ENCODE measurements at regions of chr4 and their contacts with region 1.

Region 1: DNA sequence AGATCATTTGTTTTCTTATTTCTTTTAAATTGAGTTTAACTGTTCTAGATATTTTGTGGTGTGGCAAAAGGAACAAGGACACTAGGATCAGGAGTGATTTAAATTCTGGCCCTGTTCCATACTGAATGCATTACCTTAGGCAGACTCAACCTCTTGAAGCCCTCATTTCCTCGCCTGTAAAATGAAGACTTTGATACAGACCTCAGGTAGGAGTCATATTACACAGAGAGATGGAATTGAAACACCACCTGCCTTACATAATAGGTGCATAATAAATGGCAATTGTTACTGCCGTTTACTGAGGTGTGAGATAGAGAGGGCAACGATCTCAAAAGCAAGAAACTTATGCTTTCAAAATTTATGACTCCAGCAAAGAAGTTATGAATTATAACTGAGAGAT is 28.2 kb upstream of the RASSF6 start:
- DNase-seq: no peak
- H3K4me3 ChIP-seq: no peak overlapping the region
- H3K27ac ChIP-seq: no peak overlapping the region
- H3K4me1 ChIP-seq: peaks cover 25% of the 10 kb centered on the region
- H3K27me3 ChIP-seq: no peaks in the 10 kb centered on the region
- CTCF ChIP-seq: no peak

Region 2: GRCh38 chr4:73593631-73594241 is 54.7 kb before region 1 on chr4:
- CTCF ChIA-PET with region 1: no interaction called
- dilution Hi-C with region 1: loop called (anchors 5 kb)
- in situ Hi-C with region 1: loop called in 1 of 2 experiments (anchors 10 kb)
- intact Hi-C with region 1: loop called (anchors 1 kb)
- DNase-seq: no peak
- H3K4me3 ChIP-seq: no peak overlapping the region
- H3K27ac ChIP-seq: no peak overlapping the region
- H3K4me1 ChIP-seq: peaks cover 26% of the 10 kb centered on the region
- H3K27me3 ChIP-seq: no peaks in the 10 kb centered on the region
- CTCF ChIP-seq: peak; percentile 51 to 62

Region 3: DNA sequence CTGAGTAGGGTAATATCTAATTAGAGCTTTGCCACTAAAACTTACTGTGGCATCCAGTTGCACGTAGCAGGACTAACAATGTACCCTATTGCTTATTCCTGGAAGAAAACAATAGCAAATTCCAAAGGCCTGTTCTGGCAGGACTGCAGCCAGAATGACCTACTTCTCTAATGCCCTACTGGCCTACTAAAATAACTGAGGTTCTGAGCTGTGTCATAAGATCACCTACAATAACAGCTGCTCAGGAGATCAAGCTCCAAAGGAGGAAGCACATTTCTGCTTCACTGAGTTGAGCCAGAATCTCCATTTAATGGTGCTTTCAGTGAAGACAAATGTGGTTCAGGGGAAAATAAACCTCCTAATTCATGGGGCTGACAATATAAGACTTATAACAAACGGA is 49.7 kb after region 1 on chr4:
- CTCF ChIA-PET with region 1: no interaction called
- dilution Hi-C with region 1: no loop called
- in situ Hi-C with region 1: no loop called
- intact Hi-C with region 1: no loop called
- DNase-seq: peak; percentile 87
- H3K4me3 ChIP-seq: no peak overlapping the region
- H3K27ac ChIP-seq: no peak overlapping the region
- H3K4me1 ChIP-seq: peaks cover 30% of the 10 kb centered on the region
- H3K27me3 ChIP-seq: no peaks in the 10 kb centered on the region
- CTCF ChIP-seq: no peak